Naive thymus-derived CD8-positive, alpha-beta T cell (primary cell): ENCODE measurements at regions of chr12 and their contacts with region 1.

Region 1: GRCh38 chr12:56158029-56158925 is at the start of gene MYL6:
- DNase-seq: peak; percentile 72 to 97 (median 90)
- ATAC-seq: peak; percentile 85 to 87
- H3K4me3 Mint-ChIP-seq: peak within 1 kb of the TSS; percentile 93 to 99 (median 98)
- H3K27ac Mint-ChIP-seq: peak within 1 kb of the TSS; percentile 95 to 100 (median 98)
- H3K4me1 Mint-ChIP-seq: peaks cover 32 to 54% (median 49%) of the 10 kb centered on the region in 4 donors
- H3K27me3 Mint-ChIP-seq: no peaks in the 10 kb centered on the region
- polyA plus RNA-seq, gene MYL6: 1,813 to 2,533 (median 2,044) TPM

Region 2: GRCh38 chr12:56061982-56062381 is 96.3 kb before region 1 on chr12:
- POLR2A ChIA-PET with region 1: no interaction called
- DNase-seq: no peak
- ATAC-seq: no peak
- H3K4me3 Mint-ChIP-seq: no peak overlapping the region
- H3K27ac Mint-ChIP-seq: no peak overlapping the region
- H3K4me1 Mint-ChIP-seq: no peaks in the 10 kb centered on the region
- H3K27me3 Mint-ChIP-seq: peaks cover 0 to 1% (median 0%) of the 10 kb centered on the region in 5 donors

Region 3: GRCh38 chr12:56137853-56138571 is 20.3 kb before region 1 on chr12:
- POLR2A ChIA-PET with region 1: interaction called, 11 read pairs
- DNase-seq: peak in 3 of 10 donors; percentile 31 to 41 (median 41)
- ATAC-seq: peak; percentile 49 to 56
- H3K4me3 Mint-ChIP-seq: peak overlapping the region in 9 of 10 donors; percentile 49 to 82 (median 71)
- H3K27ac Mint-ChIP-seq: peak overlapping the region; percentile 85 to 94 (median 92)
- H3K4me1 Mint-ChIP-seq: peaks cover 33 to 80% (median 70%) of the 10 kb centered on the region in 4 donors
- H3K27me3 Mint-ChIP-seq: no peaks in the 10 kb centered on the region

Region 4: DNA sequence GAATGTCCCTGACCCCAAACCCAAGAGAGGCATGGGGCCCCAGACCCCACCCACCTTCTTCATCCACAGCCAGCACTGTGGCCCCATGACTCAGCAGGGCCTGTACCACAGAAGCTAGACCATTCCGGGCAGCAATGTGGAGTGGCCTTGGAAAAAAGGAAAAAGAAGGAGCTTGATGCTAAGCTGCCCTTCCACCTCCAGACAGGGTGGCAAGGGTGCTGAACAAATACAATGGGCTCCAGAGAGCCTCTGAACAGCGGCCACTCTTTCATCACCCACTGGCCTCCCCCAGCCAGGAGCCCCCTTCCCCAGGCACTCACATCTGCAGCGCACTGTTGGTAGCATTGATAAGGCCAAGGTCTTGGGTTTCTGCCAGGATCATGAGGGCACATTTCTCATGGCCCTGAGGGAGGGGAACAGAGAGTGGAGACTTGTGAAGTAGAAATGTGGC is 85.5 kb after region 1 on chr12:
- POLR2A ChIA-PET with region 1: no interaction called
- DNase-seq: no peak
- ATAC-seq: no peak
- H3K4me3 Mint-ChIP-seq: no peak overlapping the region
- H3K27ac Mint-ChIP-seq: no peak overlapping the region
- H3K4me1 Mint-ChIP-seq: peaks cover 0 to 5% (median 0%) of the 10 kb centered on the region in 4 donors
- H3K27me3 Mint-ChIP-seq: no peaks in the 10 kb centered on the region